Common myeloid progenitor, CD34-positive (primary cell): ENCODE measurements at regions of chr7 and their contacts with region 1.

Region 1: GRCh38 chr7:36192053-36192824 is 39.2 kb downstream of the EEPD1 start:
- DNase-seq: peak; percentile 69 to 94 (median 92)
- H3K4me3 ChIP-seq: peak overlapping the region in 2 of 7 experiments; percentile 13 to 27
- H3K27ac ChIP-seq: peak overlapping the region; percentile 45 to 48
- H3K4me1 ChIP-seq: peaks cover 11 to 58% (median 27%) of the 10 kb centered on the region in 4 experiments
- H3K27me3 ChIP-seq: no peaks in the 10 kb centered on the region

Region 2: DNA sequence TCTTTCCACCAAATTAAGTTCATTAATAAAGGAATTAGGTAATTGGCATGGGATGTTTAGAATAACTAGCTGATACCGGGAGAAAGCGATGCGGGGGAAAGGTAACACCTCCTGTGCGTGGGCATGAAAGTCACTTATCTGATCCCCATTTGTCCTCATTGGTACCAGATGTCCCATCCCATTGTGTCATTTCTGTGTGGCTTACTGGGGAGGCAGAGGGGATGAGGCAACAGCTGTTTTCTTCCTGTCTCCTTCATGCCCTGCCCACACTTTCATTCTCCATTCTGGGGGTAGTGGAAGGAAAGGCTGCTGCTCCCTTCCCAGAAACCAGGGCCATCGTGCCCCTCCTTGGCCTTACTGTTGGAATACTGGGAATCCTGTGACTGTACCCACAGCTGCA is 12.1 kb before region 1 on chr7:
- CTCF ChIA-PET with region 1: interaction called, 14 read pairs
- POLR2A ChIA-PET with region 1: no interaction called
- DNase-seq: no peak
- H3K4me3 ChIP-seq: no peak overlapping the region
- H3K27ac ChIP-seq: no peak overlapping the region
- H3K4me1 ChIP-seq: peaks cover 0 to 62% (median 29%) of the 10 kb centered on the region in 4 experiments
- H3K27me3 ChIP-seq: no peaks in the 10 kb centered on the region

Region 3: GRCh38 chr7:36202398-36202797 is 10.2 kb after region 1 on chr7:
- CTCF ChIA-PET with region 1: interaction called, 10 read pairs
- POLR2A ChIA-PET with region 1: no interaction called
- DNase-seq: peak; percentile 64 to 94 (median 89)
- H3K4me3 ChIP-seq: no peak overlapping the region
- H3K27ac ChIP-seq: peak overlapping the region in 1 of 2 experiments; percentile 52
- H3K4me1 ChIP-seq: peaks cover 6 to 80% (median 41%) of the 10 kb centered on the region in 4 experiments
- H3K27me3 ChIP-seq: no peaks in the 10 kb centered on the region

Region 4: GRCh38 chr7:36216063-36216684 is 23.9 kb after region 1 on chr7:
- CTCF ChIA-PET with region 1: no interaction called
- POLR2A ChIA-PET with region 1: no interaction called
- DNase-seq: no peak
- H3K4me3 ChIP-seq: no peak overlapping the region
- H3K27ac ChIP-seq: no peak overlapping the region
- H3K4me1 ChIP-seq: peaks cover 0 to 6% (median 0%) of the 10 kb centered on the region in 4 experiments
- H3K27me3 ChIP-seq: no peaks in the 10 kb centered on the region

Region 5: DNA sequence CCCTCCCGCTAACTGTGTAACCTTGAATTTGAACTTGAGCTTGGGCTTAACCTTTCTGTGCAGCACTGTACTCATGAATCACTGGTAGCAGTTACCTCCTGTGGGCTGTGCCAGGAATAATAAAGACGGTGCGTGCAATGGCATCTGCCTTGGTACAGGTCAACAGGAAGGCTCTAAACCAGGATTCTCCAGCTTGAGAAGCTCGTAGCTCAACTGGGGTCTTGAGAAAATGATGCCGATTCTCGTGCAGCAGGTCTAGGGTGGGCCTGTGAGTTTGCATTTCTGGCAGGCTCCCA is 85.0 kb after region 1 on chr7:
- CTCF ChIA-PET with region 1: no interaction called
- POLR2A ChIA-PET with region 1: no interaction called
- DNase-seq: no peak
- H3K4me3 ChIP-seq: no peak overlapping the region
- H3K27ac ChIP-seq: no peak overlapping the region
- H3K4me1 ChIP-seq: peaks cover 3 to 37% (median 10%) of the 10 kb centered on the region in 4 experiments
- H3K27me3 ChIP-seq: no peaks in the 10 kb centered on the region